ENCODE measurements at regions of chr20 and their contacts with region 1.

Region 1: GRCh38 chr20:16599257-16599656 is 26.0 kb upstream of the KIF16B start:
- DNase-seq: no peak
- ATAC-seq: no peak
- H3K4me3 ChIP-seq: no peak overlapping the region
- H3K4me3 Mint-ChIP-seq: no peak overlapping the region
- H3K27ac ChIP-seq: no peak overlapping the region
- H3K27ac Mint-ChIP-seq: no peak overlapping the region
- H3K4me1 ChIP-seq: no peaks in the 10 kb centered on the region
- H3K4me1 Mint-ChIP-seq: no peaks in the 10 kb centered on the region
- H3K27me3 ChIP-seq: no peaks in the 10 kb centered on the region
- H3K27me3 Mint-ChIP-seq: peaks cover 10% of the 10 kb centered on the region
- CTCF ChIP-seq: no peak

Region 2: DNA sequence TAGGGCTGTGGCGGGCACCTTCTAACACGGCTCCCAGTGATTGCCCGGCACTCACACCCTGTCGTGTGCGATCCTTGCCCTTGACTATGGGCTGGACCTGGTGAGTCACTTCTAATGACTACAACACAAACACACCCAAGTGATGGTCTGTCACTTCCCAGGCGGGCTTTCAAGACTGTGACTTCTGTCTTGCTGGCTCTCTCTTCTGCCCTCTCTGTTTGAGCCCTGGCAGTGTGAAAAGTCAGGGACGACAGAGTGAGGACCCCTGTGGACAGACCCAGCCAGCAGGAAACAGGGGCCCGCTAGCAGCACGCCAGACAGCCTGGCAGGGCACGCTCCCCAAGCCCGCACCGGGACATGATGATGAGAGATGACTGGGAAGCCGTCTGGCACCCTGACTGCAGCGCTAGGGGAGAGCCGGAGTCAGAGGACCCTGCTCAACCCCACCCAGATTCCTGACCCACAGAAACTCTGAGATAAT is 69.0 kb before region 1 on chr20:
- CTCF ChIA-PET with region 1: no interaction called
- POLR2A ChIA-PET with region 1: no interaction called
- intact Hi-C with region 1: loop called in 1 of 2 experiments (anchors 10 kb)
- DNase-seq: no peak
- ATAC-seq: no peak
- H3K4me3 ChIP-seq: no peak overlapping the region
- H3K4me3 Mint-ChIP-seq: no peak overlapping the region
- H3K27ac ChIP-seq: no peak overlapping the region
- H3K27ac Mint-ChIP-seq: no peak overlapping the region
- H3K4me1 ChIP-seq: no peaks in the 10 kb centered on the region
- H3K4me1 Mint-ChIP-seq: no peaks in the 10 kb centered on the region
- H3K27me3 ChIP-seq: no peaks in the 10 kb centered on the region
- H3K27me3 Mint-ChIP-seq: no peaks in the 10 kb centered on the region
- CTCF ChIP-seq: no peak

Measured in CD4-positive, alpha-beta T cell (primary cell).